ENCODE measurements at regions of chrX and their contacts with region 1.

Region 1: DNA sequence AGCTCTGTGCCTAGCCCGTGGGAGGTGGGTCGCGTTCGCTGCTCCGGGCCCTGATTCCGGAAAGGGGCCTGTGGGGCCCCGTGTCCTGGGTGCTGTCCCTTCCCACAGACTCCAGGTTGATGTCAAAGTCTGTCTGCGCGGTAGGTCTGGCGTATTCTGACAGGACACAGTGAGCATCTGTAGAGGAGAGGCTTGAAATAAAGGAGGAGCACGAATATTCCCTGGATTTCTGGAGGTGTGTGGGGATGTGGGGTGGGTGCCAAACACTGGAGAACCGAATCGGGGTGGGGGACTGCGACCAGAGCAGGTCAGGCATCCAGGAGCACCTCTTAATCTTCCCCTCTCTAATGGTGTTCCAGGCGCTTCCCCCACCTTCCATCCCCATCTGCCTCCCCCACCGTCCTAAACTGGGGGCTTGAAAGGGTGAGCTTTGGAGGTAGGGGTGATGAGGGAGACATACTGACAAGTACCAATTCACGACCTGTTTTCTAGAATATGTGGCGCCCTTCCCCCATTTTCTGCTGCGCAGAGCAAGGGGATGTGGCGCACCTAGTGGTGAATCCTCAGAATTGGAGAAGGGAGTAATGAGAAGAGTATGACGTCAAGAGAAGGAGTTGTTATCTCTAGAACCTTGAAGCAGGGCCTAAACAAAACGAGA is 877 bp downstream of the GPRASP1 start:
- DNase-seq: peak in 4 of 5 donors; percentile 38 to 76 (median 66)
- H3K4me3 ChIP-seq: peak overlapping the region; percentile 70
- H3K4me3 Mint-ChIP-seq: peak overlapping the region; percentile 88 to 98 (median 95)
- H3K27ac ChIP-seq: peak overlapping the region; percentile 51
- H3K27ac Mint-ChIP-seq: peak overlapping the region; percentile 74 to 94 (median 90)
- H3K4me1 ChIP-seq: peaks cover 8% of the 10 kb centered on the region
- H3K4me1 Mint-ChIP-seq: peaks cover 15 to 47% (median 24%) of the 10 kb centered on the region in 3 donors
- H3K27me3 ChIP-seq: no peaks in the 10 kb centered on the region
- H3K27me3 Mint-ChIP-seq: peaks cover 0 to 7% of the 10 kb centered on the region in 2 donors

Region 2: DNA sequence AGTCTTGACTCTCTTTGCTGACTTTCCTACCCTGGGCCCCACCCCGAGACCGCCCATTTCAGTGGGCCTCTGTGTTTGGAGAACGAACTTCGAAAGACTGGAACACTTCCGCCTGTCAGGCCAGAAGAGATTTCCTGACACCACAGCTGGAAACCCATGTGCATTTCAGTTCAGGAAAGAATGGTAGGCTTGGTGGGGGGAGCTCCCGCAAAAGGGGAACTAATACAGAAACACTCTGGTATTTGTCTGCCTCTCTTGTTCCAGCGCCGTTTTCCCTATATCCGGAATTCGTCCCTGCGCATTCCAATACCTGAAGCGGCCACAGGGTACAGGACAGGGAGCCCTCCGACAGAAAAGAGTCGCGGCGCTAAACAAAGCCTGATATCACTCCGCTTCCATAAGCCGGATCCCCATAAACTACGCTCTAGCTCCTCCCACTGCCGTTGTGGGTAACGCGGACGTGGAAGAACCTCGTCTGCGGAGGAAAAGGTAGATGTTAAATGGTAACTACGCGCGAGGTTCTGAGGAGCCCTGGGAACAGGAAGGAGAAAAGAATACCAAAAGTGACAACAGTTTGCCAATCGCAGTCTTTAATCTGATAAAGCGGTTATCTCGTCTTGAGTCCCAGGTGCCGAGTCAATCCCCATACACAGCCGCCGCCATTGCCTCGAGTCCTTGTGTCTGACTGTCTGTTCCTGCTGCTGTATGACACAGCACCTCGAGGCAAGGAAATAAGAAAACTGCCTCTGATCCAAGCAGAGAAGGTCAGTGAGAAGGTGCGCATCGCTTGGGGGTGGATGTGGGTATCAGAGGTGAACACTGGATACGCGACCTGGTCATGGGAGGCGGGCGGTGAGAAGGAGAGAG is 52.8 kb before region 1 on chrX and contains the start of gene ARMCX5:
- CTCF ChIA-PET with region 1: interaction called, 3 read pairs
- POLR2A ChIA-PET with region 1: interaction called, 11 read pairs
- DNase-seq: peak; percentile 46 to 82 (median 77)
- H3K4me3 ChIP-seq: peak within 1 kb of the TSS; percentile 90
- H3K4me3 Mint-ChIP-seq: peak within 1 kb of the TSS; percentile 91 to 98 (median 96)
- H3K27ac ChIP-seq: peak within 1 kb of the TSS; percentile 70
- H3K27ac Mint-ChIP-seq: peak within 1 kb of the TSS; percentile 91 to 99 (median 97)
- H3K4me1 ChIP-seq: peaks cover 7% of the 10 kb centered on the region
- H3K4me1 Mint-ChIP-seq: peaks cover 25 to 62% (median 41%) of the 10 kb centered on the region in 3 donors
- H3K27me3 ChIP-seq: no peaks in the 10 kb centered on the region
- H3K27me3 Mint-ChIP-seq: peaks cover 0 to 2% of the 10 kb centered on the region in 2 donors
- total RNA-seq, gene ARMCX5: 7.3 to 8.8 TPM

Region 3: GRCh38 chrX:102624105-102624504 is 28.1 kb before region 1 on chrX:
- CTCF ChIA-PET with region 1: no interaction called
- POLR2A ChIA-PET with region 1: no interaction called
- DNase-seq: no peak
- H3K4me3 ChIP-seq: no peak overlapping the region
- H3K4me3 Mint-ChIP-seq: no peak overlapping the region
- H3K27ac ChIP-seq: no peak overlapping the region
- H3K27ac Mint-ChIP-seq: no peak overlapping the region
- H3K4me1 ChIP-seq: no peaks in the 10 kb centered on the region
- H3K4me1 Mint-ChIP-seq: peaks cover 13 to 40% (median 14%) of the 10 kb centered on the region in 3 donors
- H3K27me3 ChIP-seq: no peaks in the 10 kb centered on the region
- H3K27me3 Mint-ChIP-seq: no peaks in the 10 kb centered on the region